K562 (cell line): ENCODE measurements at regions of chr20 and their contacts with region 1.

Region 1: DNA sequence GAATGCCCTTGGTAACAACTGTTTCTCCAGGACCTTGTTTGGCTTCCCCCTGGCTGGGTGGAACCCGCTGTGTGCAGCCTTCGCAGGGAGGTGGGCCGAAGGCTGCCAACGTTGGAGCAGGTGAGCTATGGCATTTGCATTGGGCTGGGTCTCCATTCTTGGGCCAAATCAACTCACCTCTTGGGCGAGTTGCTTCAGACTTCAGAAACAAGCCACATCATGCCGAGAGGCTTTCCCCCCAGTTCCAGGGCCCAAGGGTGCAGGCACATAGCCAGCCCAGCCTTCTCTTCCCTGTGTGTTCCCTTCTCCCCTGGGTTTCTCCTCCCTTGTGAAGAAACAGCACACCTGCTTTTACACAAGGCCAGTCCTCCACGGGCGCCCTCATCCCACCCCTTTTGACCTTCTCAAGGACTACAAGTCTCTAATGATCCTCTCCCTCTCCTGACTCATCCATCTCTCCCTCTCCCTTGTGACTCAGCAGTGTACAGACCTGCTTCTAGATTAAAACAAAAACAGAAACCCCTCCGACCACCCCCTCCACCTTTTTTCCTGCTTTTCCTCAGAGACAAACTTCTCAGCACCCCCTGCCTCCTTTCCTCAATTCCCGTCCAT is 41.6 kb downstream of the FAM209B start:
- DNase-seq: peak in 2 of 4 experiments; percentile 6 to 17
- ATAC-seq: peak; percentile 44; the same call in 1 of the 3 replicates
- H3K4me3 ChIP-seq: no peak overlapping the region
- H3K27ac ChIP-seq: no peak overlapping the region
- H3K4me1 ChIP-seq: no peaks in the 10 kb centered on the region; a peak in 1 of 5 replicates
- H3K27me3 ChIP-seq: peaks cover 2 to 38% of the 10 kb centered on the region in 2 experiments; a peak in 3 of 5 replicates
- CTCF ChIP-seq: no peak
- EP300 ChIP-seq: no peak
- POLR2A ChIP-seq: no peak
- RAD21 ChIP-seq: no peak

Region 2: DNA sequence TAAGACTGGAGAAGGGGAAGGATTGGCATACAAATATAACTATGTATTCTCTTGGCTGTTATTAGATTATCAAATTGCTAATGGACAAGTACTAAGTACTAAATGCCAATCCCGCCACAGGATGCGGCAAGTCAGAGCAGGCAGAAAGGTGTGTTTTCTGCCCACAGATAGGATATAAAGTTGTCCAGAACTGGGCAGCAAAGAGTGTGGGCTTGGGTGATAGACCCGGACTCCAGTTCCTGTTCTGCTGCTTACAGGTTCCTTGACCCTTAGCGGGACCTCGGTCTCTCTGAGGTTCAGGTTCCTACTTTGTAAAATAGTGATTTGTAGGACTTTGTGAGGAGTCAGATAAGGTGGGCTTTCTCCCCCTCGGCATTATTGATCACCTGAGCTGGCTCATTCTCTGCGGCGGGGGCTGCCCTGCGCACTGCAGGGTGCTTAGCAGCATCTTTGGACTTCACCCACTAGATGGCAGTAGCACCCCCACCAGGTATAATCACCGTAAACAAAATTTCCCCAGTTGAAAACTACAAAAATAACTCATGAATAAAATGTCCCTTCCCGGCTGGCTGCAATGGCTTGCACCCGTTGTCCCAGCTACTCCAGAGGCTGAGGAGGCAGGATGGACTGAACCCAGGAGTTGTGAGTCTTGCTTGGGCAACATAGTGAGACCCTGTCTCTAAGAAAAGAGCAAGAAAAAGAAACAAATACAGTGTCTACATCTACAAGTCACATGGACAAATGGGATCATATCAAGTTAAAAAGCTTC is 1906.2 kb before region 1 on chr20:
- CTCF ChIA-PET with region 1: no interaction called
- POLR2A ChIA-PET with region 1: no interaction called
- in situ Hi-C with region 1: loop called (anchors 25 kb)
- intact Hi-C with region 1: no loop called
- DNase-seq: peak; percentile 23 to 44 (median 30)
- ATAC-seq: peak; percentile 91
- H3K4me3 ChIP-seq: no peak overlapping the region
- H3K27ac ChIP-seq: no peak overlapping the region
- H3K4me1 ChIP-seq: no peaks in the 10 kb centered on the region
- H3K27me3 ChIP-seq: no peaks in the 10 kb centered on the region
- CTCF ChIP-seq: peak; percentile 54 to 65 (median 60)
- EP300 ChIP-seq: no peak
- POLR2A ChIP-seq: no peak
- RAD21 ChIP-seq: peak in 1 of 2 experiments; percentile 43; a peak in 2 of 4 replicates

Region 3: GRCh38 chr20:56247948-56248782 is 326.5 kb before region 1 on chr20 and contains the start of gene MC3R:
- CTCF ChIA-PET with region 1: no interaction called
- POLR2A ChIA-PET with region 1: no interaction called
- in situ Hi-C with region 1: no loop called
- intact Hi-C with region 1: loop called (anchors 1 kb)
- DNase-seq: peak; percentile 42 to 61 (median 47)
- ATAC-seq: peak; percentile 94
- H3K4me3 ChIP-seq: no peak within 1 kb of the TSS
- H3K27ac ChIP-seq: no peak within 1 kb of the TSS
- H3K4me1 ChIP-seq: no peaks in the 10 kb centered on the region; a peak in 1 of 5 replicates
- H3K27me3 ChIP-seq: peaks cover 0 to 7% of the 10 kb centered on the region in 2 experiments; a peak in 2 of 5 replicates
- CTCF ChIP-seq: peak; percentile 64 to 79 (median 64)
- EP300 ChIP-seq: no peak
- POLR2A ChIP-seq: no peak
- RAD21 ChIP-seq: peak in 1 of 2 experiments; percentile 60; a peak in 2 of 4 replicates
- polyA plus RNA-seq, gene MC3R: not detected

Region 4: DNA sequence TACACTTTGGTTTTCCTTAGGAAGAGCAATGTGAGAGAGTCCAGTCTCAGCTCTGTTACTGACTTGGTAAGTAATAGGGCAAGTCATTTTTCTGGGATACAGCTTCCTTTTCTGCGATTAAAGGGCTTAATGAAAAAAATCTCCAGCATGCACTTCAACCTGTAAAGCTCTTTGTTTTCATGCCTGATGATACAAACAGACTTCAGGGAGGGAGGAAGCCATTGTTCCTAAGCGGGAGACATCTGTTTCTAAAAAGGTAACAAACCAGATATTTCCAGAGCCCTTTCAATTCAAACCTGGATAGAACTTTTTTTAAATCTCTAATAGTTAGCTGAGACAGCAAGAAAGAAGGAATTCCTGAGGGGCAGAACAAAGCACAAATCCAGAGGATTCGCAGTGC is 167.7 kb before region 1 on chr20:
- CTCF ChIA-PET with region 1: no interaction called
- POLR2A ChIA-PET with region 1: no interaction called
- in situ Hi-C with region 1: no loop called
- intact Hi-C with region 1: no loop called
- DNase-seq: no peak
- ATAC-seq: no peak
- H3K4me3 ChIP-seq: no peak overlapping the region
- H3K27ac ChIP-seq: peak overlapping the region; percentile 10; the same call in 1 of the 3 replicates
- H3K4me1 ChIP-seq: peaks cover 9 to 35% of the 10 kb centered on the region in 2 experiments
- H3K27me3 ChIP-seq: no peaks in the 10 kb centered on the region
- CTCF ChIP-seq: no peak
- EP300 ChIP-seq: no peak
- POLR2A ChIP-seq: no peak
- RAD21 ChIP-seq: no peak

Region 5: GRCh38 chr20:56497326-56497725 is 77.3 kb before region 1 on chr20:
- CTCF ChIA-PET with region 1: no interaction called
- POLR2A ChIA-PET with region 1: no interaction called
- in situ Hi-C with region 1: no loop called
- intact Hi-C with region 1: no loop called
- DNase-seq: no peak
- ATAC-seq: no peak
- H3K4me3 ChIP-seq: no peak overlapping the region
- H3K27ac ChIP-seq: no peak overlapping the region
- H3K4me1 ChIP-seq: no peaks in the 10 kb centered on the region
- H3K27me3 ChIP-seq: no peaks in the 10 kb centered on the region
- CTCF ChIP-seq: no peak
- EP300 ChIP-seq: no peak
- POLR2A ChIP-seq: no peak
- RAD21 ChIP-seq: no peak

Region 6: DNA sequence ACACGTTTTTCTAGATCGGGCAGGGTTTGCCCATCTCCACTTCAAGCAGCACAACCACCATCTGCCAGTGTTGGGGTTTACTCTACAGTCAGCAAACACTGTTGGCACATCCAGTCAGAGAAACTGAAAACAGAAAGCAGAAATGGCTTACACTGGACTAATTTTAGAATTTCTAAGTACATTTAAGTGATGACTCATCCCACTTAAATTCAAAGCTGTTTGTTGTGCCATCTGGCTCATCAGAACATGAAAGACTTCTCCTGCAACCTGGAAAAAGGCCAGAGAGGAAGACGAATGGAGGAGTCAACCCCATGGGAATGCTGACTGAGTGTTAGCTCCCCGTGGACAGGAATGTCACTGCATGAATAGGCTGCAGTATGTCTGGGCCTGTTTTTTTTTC is 19.8 kb before region 1 on chr20:
- CTCF ChIA-PET with region 1: interaction called, 10 read pairs
- POLR2A ChIA-PET with region 1: no interaction called
- in situ Hi-C with region 1: no loop called
- intact Hi-C with region 1: loop called (anchors 1 kb)
- DNase-seq: peak in 3 of 4 experiments; percentile 41 to 61 (median 54)
- ATAC-seq: no peak
- H3K4me3 ChIP-seq: no peak overlapping the region
- H3K27ac ChIP-seq: no peak overlapping the region
- H3K4me1 ChIP-seq: peaks cover 0 to 6% of the 10 kb centered on the region in 2 experiments; a peak in 1 of 5 replicates
- H3K27me3 ChIP-seq: peaks cover 8 to 33% of the 10 kb centered on the region in 2 experiments; a peak in 4 of 5 replicates
- CTCF ChIP-seq: no peak
- EP300 ChIP-seq: no peak
- POLR2A ChIP-seq: no peak
- RAD21 ChIP-seq: no peak